Breast epithelium (tissue), 4 donors: ENCODE measurements at regions of chr1 and their contacts with region 1.

Region 1: DNA sequence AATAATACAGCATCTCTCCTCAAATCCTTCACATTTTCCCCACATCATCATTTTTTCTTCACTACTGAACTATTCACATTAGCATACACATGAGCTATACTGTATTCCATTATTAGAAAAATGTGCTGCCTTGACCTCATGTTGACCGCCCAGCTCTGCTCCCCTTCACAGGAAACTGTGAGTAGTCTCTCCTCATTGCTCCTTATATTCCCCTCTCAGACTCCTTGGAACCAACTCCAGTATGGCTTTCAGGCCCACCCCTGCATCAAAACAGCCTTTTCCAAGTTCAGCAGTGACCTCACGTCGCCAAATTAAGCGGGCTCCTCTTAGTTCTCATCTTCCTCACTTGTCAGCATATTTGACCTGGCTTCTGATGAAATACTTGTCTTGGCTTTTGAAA is 59.2 kb upstream of the SPAG17 start:
- DNase-seq: no peak
- H3K4me3 ChIP-seq: no peak overlapping the region
- H3K27ac ChIP-seq: no peak overlapping the region
- H3K4me1 ChIP-seq: no peaks in the 10 kb centered on the region
- H3K27me3 ChIP-seq: no peaks in the 10 kb centered on the region
- CTCF ChIP-seq: no peak
- POLR2A ChIP-seq: no peak

Region 2: DNA sequence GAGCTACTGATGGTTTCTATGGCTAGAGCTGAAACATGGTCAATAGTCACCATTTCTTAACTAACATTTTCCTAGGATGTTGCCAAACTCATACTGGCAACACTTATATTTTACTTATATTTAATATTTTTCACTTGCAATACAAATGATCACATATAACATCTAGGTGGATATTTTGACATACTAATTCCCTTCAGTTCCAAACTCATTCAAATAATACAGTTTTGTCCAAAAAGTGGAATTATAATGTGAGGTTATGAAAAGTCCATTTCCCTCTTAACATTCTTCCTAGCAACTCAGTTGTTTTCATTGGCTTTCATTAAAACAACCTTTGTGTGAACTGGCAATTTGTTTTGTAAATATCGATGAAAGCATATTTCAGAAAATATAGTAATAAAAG is 75.2 kb before region 1 on chr1:
- intact Hi-C with region 1: no loop called
- DNase-seq: no peak
- H3K4me3 ChIP-seq: no peak overlapping the region
- H3K27ac ChIP-seq: no peak overlapping the region
- H3K4me1 ChIP-seq: no peaks in the 10 kb centered on the region
- H3K27me3 ChIP-seq: no peaks in the 10 kb centered on the region
- CTCF ChIP-seq: no peak
- POLR2A ChIP-seq: no peak

Region 3: DNA sequence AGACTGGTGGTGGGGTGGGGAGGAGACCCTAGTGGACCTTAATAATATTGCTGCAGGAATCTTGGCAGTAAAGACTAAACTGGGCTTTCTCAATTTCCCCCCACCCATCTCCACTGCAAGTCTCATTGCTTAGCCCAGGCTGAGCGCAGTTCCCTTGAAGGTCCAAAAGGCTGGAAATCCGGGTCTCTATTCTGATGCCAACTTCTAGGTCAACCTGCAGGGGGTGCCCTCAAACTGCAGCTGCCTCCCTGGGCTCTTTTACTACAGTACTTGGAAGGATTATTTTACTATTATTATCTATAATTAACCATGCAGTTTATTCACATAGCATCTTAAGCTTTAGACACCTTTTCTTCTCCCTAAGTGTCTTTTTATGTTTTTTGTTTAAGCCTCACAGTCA is 981.6 kb after region 1 on chr1:
- intact Hi-C with region 1: loop called (anchors 5 kb)
- DNase-seq: no peak
- H3K4me3 ChIP-seq: no peak overlapping the region
- H3K27ac ChIP-seq: no peak overlapping the region
- H3K4me1 ChIP-seq: no peaks in the 10 kb centered on the region
- H3K27me3 ChIP-seq: no peaks in the 10 kb centered on the region
- CTCF ChIP-seq: no peak
- POLR2A ChIP-seq: no peak